Adrenal gland (tissue), 19 donors: ENCODE measurements at regions of chr10 and their contacts with region 1.

Region 1: GRCh38 chr10:124539935-124540641 is 78.5 kb downstream of the LHPP start:
- DNase-seq: peak in 6 of 7 donors; percentile 58 to 79 (median 60)
- H3K4me3 ChIP-seq: no peak overlapping the region
- H3K27ac ChIP-seq: no peak overlapping the region
- H3K4me1 ChIP-seq: peaks cover 0 to 16% of the 10 kb centered on the region in 2 donors
- H3K27me3 ChIP-seq: no peaks in the 10 kb centered on the region
- CTCF ChIP-seq: peak; percentile 36 to 80 (median 66)
- POLR2A ChIP-seq: no peak

Region 2: DNA sequence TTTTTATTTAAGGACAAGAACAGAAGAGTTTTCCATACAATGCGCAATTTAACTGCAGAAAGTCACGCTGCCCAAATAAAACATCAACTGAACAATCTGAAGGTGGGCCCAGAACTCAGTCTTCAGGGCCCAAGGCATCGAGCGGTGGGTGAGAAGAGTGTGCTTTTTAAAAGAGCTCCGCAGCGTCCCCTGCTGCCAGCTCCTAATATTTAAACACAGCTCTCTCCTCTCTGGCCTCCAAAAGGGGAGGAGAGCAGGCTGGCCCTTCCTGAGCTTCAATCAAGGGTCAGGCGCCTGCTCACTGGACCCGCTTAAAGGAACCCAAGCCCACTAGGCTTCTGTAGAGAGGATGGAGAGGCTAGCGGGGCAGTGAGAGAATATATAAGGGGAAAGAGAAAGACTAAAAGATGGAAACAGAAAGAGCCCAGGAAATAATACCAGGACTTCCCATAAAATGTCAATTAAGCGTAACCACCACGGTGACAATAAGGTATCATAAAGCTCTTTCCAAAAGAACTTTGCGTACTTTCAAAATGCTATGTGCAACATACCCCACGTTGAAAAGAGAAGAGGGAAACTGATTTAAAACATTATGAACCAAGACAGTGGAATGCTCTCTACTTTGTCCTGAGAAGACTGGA is 201.3 kb after region 1 on chr10:
- intact Hi-C with region 1: loop called in 1 of 2 experiments (anchors 5 kb)
- DNase-seq: peak; percentile 85 to 96 (median 92)
- H3K4me3 ChIP-seq: peak overlapping the region in 1 of 4 donors; percentile 79
- H3K27ac ChIP-seq: peak overlapping the region; percentile 44 to 95 (median 90)
- H3K4me1 ChIP-seq: peaks cover 68 to 73% of the 10 kb centered on the region in 2 donors
- H3K27me3 ChIP-seq: no peaks in the 10 kb centered on the region
- CTCF ChIP-seq: peak; percentile 80 to 99 (median 96)
- POLR2A ChIP-seq: peak in 1 of 2 donors; percentile 52